Colonic mucosa (tissue), 4 donors: ENCODE measurements at regions of chr12 and their contacts with region 1.

Region 1: DNA sequence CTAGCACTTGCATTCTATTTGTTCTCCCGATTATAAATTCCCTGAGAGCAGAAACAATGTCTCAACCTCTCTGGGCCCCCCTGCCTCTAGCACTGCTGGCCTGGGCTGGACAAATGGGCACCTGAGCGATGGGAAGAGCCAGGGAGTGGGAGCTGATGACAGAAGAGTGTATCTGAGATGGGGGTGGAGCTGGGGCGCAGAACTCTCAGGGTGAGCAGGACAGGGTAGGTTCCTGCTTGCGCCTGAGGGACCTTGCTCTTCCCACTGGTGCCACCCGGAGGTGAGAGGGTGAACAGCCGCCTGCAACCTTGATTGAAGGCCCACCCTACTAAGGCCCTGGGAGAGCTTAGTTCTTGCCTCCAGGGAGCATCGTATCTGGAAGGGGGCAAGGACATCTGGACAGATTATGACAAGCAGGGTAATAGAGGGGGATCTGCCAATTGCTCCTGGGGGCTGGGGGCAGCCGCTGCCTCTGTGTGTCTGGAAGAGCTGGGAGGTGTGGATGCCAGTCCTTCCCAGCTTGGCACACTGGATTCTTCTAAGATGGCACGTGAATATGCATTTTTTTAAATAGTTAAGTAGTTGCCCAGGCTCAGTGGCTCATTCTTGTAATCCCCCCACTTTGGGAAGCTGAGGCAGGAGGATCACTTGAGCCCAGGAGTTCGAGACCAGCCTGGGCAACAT is 43.0 kb upstream of the TSPAN9 start:
- DNase-seq: peak; percentile 44
- H3K4me3 ChIP-seq: no peak overlapping the region
- H3K27ac ChIP-seq: no peak overlapping the region
- H3K4me1 ChIP-seq: no peaks in the 10 kb centered on the region
- H3K27me3 ChIP-seq: no peaks in the 10 kb centered on the region
- CTCF ChIP-seq: peak; percentile 44

Region 2: DNA sequence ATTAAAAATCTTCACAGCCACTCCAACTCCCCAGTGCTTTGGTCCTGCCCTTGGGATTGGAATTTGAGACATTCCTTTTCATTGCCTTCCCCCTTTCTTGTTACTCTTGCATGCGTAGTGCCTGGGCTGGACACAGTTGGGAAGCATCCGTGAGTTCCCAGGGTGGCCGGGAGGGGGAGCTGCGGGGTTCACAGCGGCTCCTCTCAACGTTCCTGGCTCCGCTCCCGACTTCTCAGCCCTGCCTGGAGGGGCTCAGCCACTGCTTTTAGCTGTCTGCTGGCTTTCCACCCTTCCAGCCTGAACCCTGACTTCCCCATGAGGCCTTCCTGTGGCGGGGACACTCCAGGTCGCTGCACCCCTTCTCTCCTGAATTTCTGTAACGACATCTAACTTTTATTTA is 180.6 kb before region 1 on chr12:
- intact Hi-C with region 1: loop called (anchors 10 kb)
- DNase-seq: peak; percentile 76
- H3K4me3 ChIP-seq: no peak overlapping the region
- H3K27ac ChIP-seq: no peak overlapping the region
- H3K4me1 ChIP-seq: no peaks in the 10 kb centered on the region
- H3K27me3 ChIP-seq: no peaks in the 10 kb centered on the region
- CTCF ChIP-seq: peak; percentile 82

Region 3: GRCh38 chr12:2879853-2880252 is 154.4 kb before region 1 on chr12:
- intact Hi-C with region 1: loop called (anchors 10 kb)
- DNase-seq: no peak
- H3K4me3 ChIP-seq: no peak overlapping the region
- H3K27ac ChIP-seq: no peak overlapping the region
- H3K4me1 ChIP-seq: no peaks in the 10 kb centered on the region
- H3K27me3 ChIP-seq: no peaks in the 10 kb centered on the region
- CTCF ChIP-seq: no peak